Activated CD4-positive, alpha-beta T cell treated with anti-CD3 and anti-CD28 coated beads for 36 hours (primary cell): ENCODE measurements at regions of chr20 and their contacts with region 1.

Region 1: GRCh38 chr20:7935027-7935551 is 5.2 kb downstream of the HAO1 start:
- DNase-seq: no peak
- ATAC-seq: no peak
- H3K4me3 Mint-ChIP-seq: no peak overlapping the region
- H3K27ac Mint-ChIP-seq: no peak overlapping the region
- H3K4me1 Mint-ChIP-seq: no peaks in the 10 kb centered on the region
- H3K27me3 Mint-ChIP-seq: peaks cover 22% of the 10 kb centered on the region

Region 2: DNA sequence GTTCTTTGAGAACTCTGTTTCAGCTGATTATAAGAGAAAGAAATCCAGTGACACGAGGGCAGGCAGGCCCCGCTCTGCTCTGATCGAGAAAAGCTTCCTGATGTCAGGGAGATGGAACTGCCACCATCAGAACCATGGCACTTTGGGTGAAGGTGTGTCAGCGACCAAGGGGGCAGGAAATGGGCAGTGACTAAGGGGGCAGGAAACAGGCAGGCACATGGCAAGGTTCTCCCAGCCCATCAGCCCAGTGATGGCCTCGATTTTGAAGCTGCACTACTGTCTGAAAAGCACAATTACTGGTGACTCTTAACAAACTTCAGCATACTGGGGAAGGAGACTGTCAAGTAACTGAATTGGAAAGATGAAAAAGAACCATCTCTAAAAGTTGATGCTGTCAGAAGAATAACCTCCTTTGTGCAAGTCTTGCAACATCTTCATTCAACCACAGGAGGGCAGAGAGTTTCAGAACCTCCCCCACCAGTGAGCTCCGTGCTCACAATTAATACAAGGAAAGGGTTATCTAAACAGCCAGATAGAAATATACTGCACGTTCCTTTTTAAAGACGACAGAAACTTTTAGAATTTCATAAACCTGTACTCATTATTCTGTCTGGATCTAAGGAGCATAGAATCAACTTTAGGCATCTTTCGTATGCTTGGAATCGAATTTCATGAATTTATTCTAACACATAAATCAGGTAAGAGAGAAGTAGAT is 45.4 kb after region 1 on chr20:
- CTCF ChIA-PET with region 1: no interaction called
- POLR2A ChIA-PET with region 1: no interaction called
- intact Hi-C with region 1: loop called in 1 of 2 experiments (anchors 2 kb)
- DNase-seq: peak; percentile 43
- ATAC-seq: peak; percentile 80
- H3K4me3 Mint-ChIP-seq: no peak overlapping the region
- H3K27ac Mint-ChIP-seq: peak overlapping the region; percentile 44
- H3K4me1 Mint-ChIP-seq: peaks cover 14% of the 10 kb centered on the region
- H3K27me3 Mint-ChIP-seq: no peaks in the 10 kb centered on the region

Region 3: DNA sequence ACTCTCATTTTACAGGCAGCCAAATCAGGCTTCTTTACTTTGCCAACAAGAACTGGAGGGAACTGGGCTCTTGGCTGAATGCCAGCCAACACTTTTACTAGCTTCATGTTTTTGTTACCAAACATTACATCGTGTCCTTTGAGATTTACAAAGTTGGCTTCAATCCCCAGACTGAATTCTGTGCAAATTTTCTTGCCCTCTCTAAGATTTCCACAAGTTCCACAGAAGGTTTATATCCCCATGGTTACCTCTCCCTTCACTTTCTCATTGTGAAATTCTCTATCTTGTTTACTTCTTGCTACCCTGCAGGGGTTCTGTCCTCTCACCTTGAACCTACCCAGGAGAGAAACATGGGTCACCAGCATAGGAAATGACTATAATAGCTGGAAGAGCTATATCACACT is 159.3 kb after region 1 on chr20:
- CTCF ChIA-PET with region 1: no interaction called
- POLR2A ChIA-PET with region 1: no interaction called
- intact Hi-C with region 1: loop called in 1 of 2 experiments (anchors 10 kb)
- DNase-seq: no peak
- ATAC-seq: no peak
- H3K4me3 Mint-ChIP-seq: no peak overlapping the region
- H3K27ac Mint-ChIP-seq: no peak overlapping the region
- H3K4me1 Mint-ChIP-seq: no peaks in the 10 kb centered on the region
- H3K27me3 Mint-ChIP-seq: peaks cover 8% of the 10 kb centered on the region